AG04450 (cell line): ENCODE measurements at regions of chr7 and their contacts with region 1.

Region 1: DNA sequence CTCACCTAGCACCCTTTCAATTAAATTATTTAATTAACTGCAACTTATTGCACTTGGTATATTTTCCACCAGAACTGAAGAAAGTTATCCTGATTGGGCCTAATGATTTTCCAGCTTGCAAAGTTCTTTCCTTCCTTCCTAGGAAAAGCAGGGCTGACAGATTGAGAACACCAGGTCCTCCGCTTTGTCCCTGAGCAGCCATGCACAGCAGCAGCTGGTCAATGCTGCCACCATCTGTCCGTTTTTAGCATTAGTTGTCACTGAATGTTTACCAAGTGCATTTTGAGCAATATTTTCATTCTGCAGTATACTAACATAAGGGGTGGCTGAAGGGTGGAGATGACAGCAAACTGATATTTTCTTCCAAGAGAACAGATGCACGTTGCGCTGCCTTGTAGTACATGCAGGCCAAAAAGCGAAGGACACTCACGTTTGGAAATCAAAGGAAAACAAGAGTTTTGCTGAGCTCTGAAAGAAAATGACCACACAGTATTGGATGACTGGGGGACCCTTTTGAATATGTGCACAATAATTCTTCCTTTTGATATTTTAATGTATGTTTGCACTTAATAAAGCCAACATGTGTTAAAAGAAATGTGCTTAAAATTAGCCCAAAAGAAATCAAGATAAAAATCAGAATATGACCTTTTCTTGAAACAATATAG is 248.8 kb upstream of the PTN start:
- DNase-seq: peak; percentile 59
- H3K4me3 ChIP-seq: no peak overlapping the region
- H3K27ac ChIP-seq: peak overlapping the region; percentile 88
- H3K27me3 ChIP-seq: no peaks in the 10 kb centered on the region
- CTCF ChIP-seq: peak; percentile 92

Region 2: DNA sequence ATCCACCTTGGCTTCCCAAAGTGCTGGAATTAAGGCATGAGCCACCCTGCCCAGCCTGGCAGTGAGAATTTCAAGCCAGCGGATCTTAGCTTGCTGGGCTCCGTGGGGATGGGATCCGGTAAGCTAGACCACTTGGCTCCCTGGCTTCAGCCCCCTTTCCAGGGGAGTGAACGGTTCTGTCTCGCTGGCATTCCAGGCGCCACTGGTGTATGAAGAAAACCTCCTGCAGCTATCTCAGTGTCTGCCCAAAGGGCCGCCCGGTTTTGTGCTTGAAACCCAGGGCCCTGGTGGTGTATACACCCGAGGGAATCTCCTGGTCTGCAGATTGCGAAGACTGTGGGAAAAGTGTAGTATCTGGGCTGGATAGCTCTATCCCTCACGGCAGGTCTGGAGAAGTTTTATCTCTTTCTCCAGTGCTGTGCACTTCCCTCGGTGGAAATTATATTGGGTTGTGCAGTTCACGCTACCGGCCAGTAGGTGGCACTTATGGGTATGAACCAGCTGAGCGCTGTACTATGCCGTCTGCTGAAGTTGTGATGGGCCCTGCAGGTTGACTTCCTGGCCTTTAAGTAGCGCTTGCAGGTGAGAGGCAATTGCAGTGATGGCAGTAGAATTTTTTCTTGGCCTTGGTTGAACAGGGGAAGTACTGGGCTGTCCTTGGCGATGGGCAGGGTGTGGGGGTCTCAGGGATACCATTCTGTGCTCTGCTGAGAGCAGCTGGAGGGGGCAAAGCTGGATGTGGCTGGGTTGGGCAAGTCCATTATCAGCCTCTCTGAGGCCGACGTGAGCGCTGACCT is 1477.2 kb before region 1 on chr7:
- CTCF ChIA-PET with region 1: interaction called, 13 read pairs
- POLR2A ChIA-PET with region 1: no interaction called
- DNase-seq: peak; percentile 20
- H3K4me3 ChIP-seq: no peak overlapping the region
- H3K27ac ChIP-seq: no peak overlapping the region
- H3K27me3 ChIP-seq: no peaks in the 10 kb centered on the region
- CTCF ChIP-seq: peak; percentile 79

Region 3: DNA sequence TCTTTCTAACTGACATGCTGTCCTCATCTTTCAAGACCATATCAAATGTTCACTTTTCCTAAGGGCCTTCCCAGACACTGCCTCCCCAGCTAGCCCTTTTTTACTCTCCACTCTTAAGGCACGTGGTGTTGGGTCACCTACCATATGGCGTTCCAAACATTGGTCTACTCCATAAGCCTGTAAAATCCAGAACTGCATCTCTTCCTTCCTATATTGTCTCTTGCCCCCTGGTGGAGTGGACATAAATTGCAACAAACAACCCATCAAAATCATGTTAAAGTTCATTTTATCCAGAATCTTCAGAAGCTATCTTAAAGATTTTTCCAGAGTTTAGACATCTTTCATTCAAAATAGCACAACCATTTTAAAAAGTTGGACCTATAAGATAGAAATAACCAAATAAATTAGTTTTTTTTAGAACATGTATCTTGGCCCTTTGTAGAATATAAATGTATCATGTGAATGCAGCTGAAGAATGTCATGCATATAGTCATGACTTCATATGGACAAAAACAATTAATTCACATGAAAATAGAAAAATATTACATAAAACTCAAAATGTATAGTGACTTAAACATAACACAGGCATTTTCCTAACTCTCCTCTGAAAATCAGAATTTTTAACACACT is 904.6 kb before region 1 on chr7:
- CTCF ChIA-PET with region 1: interaction called, 10 read pairs
- POLR2A ChIA-PET with region 1: no interaction called
- DNase-seq: peak; percentile 3
- H3K4me3 ChIP-seq: no peak overlapping the region
- H3K27ac ChIP-seq: no peak overlapping the region
- H3K27me3 ChIP-seq: no peaks in the 10 kb centered on the region
- CTCF ChIP-seq: peak; percentile 72

Region 4: DNA sequence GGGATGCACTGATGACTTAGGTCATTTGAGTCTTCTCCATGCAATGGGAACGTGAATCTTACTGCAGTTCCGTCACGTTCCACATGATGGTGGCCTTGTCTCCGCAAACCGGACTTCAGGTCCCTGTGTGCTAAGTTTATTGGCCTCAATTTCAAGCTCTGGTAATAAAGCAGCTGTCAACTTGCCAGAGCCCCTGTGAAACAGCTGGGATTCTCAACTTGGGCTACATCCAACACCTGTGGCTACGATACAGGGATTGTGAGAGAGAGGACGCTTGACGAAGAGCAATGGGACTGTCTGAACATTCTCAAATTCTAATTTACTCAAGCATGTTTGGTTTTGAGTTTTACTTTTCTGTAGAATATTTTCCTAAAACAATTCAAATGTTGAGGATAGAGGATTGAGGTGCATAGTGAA is 423.1 kb before region 1 on chr7:
- CTCF ChIA-PET with region 1: interaction called, 74 read pairs
- POLR2A ChIA-PET with region 1: no interaction called
- DNase-seq: peak; percentile 55
- H3K4me3 ChIP-seq: no peak overlapping the region
- H3K27ac ChIP-seq: no peak overlapping the region
- H3K27me3 ChIP-seq: no peaks in the 10 kb centered on the region
- CTCF ChIP-seq: peak; percentile 84

Region 5: DNA sequence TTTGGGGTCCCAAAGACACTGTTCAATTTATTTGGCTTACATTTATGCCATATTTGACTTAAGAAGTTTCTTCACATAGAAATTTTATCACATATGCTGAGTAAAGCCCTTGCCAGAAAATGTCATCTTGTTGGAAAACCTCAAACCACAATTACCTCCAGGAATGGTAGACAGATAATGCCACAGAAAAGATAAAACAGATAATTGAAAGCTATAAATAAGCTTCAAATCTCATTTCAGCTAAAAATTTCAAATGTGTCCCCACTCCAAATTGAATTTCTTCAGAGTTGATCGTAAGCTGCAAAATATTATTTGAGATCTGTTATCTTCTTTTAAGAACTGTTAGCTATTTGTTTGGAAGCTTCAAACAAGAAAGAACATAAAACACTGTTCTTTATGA is 72.4 kb before region 1 on chr7:
- CTCF ChIA-PET with region 1: no interaction called
- POLR2A ChIA-PET with region 1: no interaction called
- DNase-seq: no peak
- H3K4me3 ChIP-seq: no peak overlapping the region
- H3K27ac ChIP-seq: no peak overlapping the region
- H3K27me3 ChIP-seq: no peaks in the 10 kb centered on the region
- CTCF ChIP-seq: no peak

Region 6: DNA sequence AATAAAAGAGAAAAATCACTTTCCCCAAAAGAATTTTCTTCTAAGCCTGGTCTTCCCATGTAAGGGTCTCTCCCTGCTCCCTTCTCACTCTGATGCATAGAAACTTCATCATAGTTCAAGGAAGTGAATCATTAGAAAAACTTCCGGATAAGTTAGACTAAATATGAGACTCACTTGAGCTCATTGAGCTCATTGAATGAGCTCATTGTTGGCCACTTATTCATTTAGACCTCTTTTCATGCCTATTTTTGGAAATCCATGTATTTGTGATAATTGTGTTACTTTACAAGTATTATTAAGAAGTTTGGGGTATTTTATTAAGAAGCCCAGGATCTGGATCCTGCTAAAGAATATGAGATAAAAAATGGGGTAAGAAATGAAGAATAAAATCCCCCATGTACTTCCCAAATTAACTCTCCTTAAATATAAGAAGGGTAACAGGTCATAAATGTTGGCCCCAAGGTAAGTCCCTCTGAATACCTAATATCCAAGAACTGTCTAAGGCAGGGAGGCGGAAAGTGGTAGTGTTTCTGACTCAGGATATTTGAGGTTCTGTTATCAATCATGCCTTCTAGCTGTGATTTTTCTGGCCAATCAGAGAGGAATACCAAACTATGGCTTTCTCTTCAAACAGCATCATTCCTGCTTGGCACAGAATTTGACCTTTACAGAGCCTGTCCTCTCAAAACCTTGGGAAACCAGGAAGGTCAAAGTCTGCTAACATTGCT is 12.3 kb before region 1 on chr7:
- CTCF ChIA-PET with region 1: interaction called, 19 read pairs
- POLR2A ChIA-PET with region 1: interaction called, 3 read pairs
- DNase-seq: peak; percentile 65
- H3K4me3 ChIP-seq: no peak overlapping the region
- H3K27ac ChIP-seq: peak overlapping the region; percentile 48
- H3K27me3 ChIP-seq: no peaks in the 10 kb centered on the region
- CTCF ChIP-seq: no peak